GM12878 (cell line): ENCODE measurements at regions of chr17 and their contacts with region 1.

Region 1: GRCh38 chr17:49997791-49998703 is 3.0 kb upstream of the DLX3 start:
- DNase-seq: peak; percentile 34
- ATAC-seq: peak; percentile 96
- H3K4me3 ChIP-seq: no peak overlapping the region
- H3K27ac ChIP-seq: no peak overlapping the region
- H3K4me1 ChIP-seq: 0 out of 2 replicates have a peak, but pooled peaks cover 3% of the 10 kb centered on the region
- H3K27me3 ChIP-seq: peaks cover 10 to 28% of the 10 kb centered on the region in 2 experiments
- CTCF ChIP-seq: peak; percentile 89 to 95 (median 91)
- EP300 ChIP-seq: no peak
- POLR2A ChIP-seq: no peak
- RAD21 ChIP-seq: peak; percentile 88

Region 2: DNA sequence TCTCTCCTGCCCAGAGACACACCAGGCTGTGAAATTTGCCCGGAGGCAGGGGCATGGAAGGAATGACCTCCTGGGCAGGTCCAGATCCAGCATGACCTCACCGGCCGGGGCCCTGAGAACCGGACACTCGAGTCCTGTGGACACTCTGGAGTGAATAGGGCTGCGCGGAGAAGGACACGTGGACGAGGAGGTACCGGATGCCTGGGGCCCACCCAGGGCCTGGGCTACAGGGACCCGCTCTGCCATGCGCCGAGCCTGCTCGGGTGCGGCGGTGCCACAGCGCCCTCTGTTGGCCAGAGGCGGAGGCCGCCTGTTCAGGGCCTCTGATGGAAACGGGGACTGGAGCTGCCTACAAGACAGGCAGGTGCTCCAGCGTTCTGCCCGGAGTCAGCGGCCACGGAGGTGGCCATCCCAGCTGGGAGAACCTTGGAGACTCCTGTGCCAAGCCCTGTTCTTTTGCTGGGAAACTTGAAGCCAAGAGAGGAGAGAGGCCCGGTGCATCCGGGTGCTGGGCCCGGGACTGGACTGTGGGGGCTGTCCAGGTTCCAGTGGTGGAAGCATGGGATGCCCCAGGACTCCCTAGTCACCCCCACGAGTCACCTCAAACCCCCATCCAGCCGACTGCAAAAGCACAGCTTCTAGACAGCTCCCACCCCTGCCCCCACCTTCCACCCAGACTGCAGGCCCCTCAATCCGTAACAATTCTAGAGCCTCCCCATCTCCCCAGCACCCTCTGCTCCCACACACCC is 441.6 kb before region 1 on chr17:
- CTCF ChIA-PET with region 1: interaction called, 37 read pairs
- POLR2A ChIA-PET with region 1: no interaction called
- RAD21 ChIA-PET with region 1: interaction called, 3 read pairs
- SMC1A ChIA-PET with region 1: interaction called, 3 read pairs
- in situ Hi-C with region 1: no loop called
- intact Hi-C with region 1: no loop called
- DNase-seq: no peak
- ATAC-seq: peak; percentile 99
- H3K4me3 ChIP-seq: no peak overlapping the region
- H3K27ac ChIP-seq: no peak overlapping the region
- H3K4me1 ChIP-seq: peaks cover 4% of the 10 kb centered on the region; the same call in 1 of the 2 replicates
- H3K27me3 ChIP-seq: no peaks in the 10 kb centered on the region
- CTCF ChIP-seq: peak; percentile 95 to 97 (median 96); a peak in 5 of 6 replicates
- EP300 ChIP-seq: no peak
- POLR2A ChIP-seq: no peak
- RAD21 ChIP-seq: peak; percentile 93

Region 3: GRCh38 chr17:49707608-49708514 is 290.2 kb before region 1 on chr17 and contains the start of gene SLC35B1:
- CTCF ChIA-PET with region 1: interaction called, 6 read pairs
- POLR2A ChIA-PET with region 1: no interaction called
- RAD21 ChIA-PET with region 1: interaction called, 3 read pairs
- SMC1A ChIA-PET with region 1: interaction called, 4 read pairs
- in situ Hi-C with region 1: loop called (anchors 10 kb)
- intact Hi-C with region 1: loop called (anchors 10 kb)
- DNase-seq: peak; percentile 97
- ATAC-seq: peak; percentile 98
- H3K4me3 ChIP-seq: peak within 1 kb of the TSS; percentile 91
- H3K27ac ChIP-seq: peak within 1 kb of the TSS; percentile 98
- H3K4me1 ChIP-seq: 0 out of 2 replicates have a peak, but pooled peaks cover 3% of the 10 kb centered on the region
- H3K27me3 ChIP-seq: no peaks in the 10 kb centered on the region
- CTCF ChIP-seq: peak; percentile 97 to 99 (median 98); a peak in 5 of 6 replicates
- EP300 ChIP-seq: 0 out of 4 replicates have a peak, but pooled peaks of 1 of the 2 experiments have one; percentile 10
- POLR2A ChIP-seq: peak; percentile 93
- RAD21 ChIP-seq: peak; percentile 70
- polyA plus RNA-seq, gene SLC35B1: 40.0 to 44.4 TPM

Region 4: DNA sequence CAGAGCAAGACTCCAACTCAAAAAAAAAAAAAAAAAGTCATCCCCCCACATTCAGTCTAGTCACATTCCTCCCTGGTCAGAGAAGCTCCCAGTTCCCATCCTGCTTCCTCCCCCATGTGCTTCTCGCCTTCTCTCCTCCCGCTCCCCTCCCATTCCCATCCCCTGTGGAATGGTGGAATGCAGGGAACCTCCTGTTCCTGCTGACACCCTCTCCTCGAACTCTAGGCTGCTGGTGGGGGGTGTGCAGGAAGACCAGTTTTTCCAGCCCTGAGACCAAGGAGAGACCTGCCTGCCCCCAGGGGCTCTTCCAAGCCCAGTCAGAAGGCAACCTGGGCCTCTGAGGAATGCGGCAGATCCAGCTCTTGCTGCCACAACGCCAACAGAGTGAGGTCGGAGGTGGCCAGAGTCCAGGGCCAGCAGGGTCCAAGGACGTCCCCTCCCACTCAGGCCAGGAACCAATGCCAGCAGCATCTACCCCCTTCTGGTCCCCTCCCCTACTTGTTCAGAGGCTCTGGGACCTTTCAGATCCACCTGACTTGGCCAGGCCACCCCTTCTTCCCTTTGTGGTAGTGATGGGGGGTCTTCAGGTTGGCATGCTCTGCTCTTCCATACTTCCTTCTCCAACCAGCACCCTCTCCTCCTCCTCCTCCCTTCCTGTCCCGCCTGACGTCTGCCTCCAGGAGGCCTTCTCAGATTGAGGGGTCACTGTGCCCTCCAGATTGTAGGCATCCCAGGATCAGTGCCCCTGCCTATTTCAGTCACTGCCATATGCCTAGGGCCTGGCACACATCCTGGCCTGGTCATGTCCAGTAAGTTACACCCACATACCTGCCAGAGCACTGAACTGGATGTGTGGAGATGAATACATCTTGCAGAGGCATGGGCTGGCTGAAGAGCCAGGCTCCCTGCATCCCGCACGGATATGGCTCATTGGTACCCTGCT is 110.7 kb before region 1 on chr17:
- CTCF ChIA-PET with region 1: interaction called, 17 read pairs
- POLR2A ChIA-PET with region 1: no interaction called
- RAD21 ChIA-PET with region 1: interaction called, 4 read pairs
- SMC1A ChIA-PET with region 1: no interaction called
- in situ Hi-C with region 1: no loop called
- intact Hi-C with region 1: loop called (anchors 5 kb)
- DNase-seq: no peak
- ATAC-seq: no peak
- H3K4me3 ChIP-seq: no peak overlapping the region
- H3K27ac ChIP-seq: no peak overlapping the region
- H3K4me1 ChIP-seq: no peaks in the 10 kb centered on the region
- H3K27me3 ChIP-seq: peaks cover 5 to 9% of the 10 kb centered on the region in 2 experiments
- CTCF ChIP-seq: no peak
- EP300 ChIP-seq: no peak
- POLR2A ChIP-seq: no peak
- RAD21 ChIP-seq: no peak

Region 5: DNA sequence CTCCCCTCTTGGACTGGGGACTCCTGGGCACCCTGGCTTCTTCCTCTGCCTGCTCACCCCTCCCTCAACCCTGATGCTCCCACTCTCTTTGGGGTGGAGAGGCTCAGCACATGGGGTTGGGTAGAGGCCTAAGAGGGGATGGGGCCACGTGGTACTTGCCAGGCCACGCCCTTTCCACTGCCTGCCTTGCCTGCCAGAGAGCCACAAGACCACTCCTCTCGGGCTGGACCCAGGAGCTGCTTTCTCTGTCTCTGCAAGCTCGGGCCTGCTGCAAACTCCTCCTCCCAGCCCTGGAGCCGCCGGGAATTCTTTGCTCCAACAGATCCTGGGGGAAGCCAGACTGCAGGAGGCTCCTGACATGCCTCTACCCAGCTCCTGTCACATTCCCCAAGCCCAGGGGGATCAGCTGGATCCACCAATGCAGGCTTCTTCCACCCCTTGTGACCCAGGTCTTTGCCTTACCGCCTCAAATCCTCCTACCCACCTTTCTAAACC is 17.3 kb before region 1 on chr17:
- CTCF ChIA-PET with region 1: interaction called, 28 read pairs
- POLR2A ChIA-PET with region 1: no interaction called
- RAD21 ChIA-PET with region 1: interaction called, 7 read pairs
- SMC1A ChIA-PET with region 1: interaction called, 3 read pairs
- in situ Hi-C with region 1: no loop called
- intact Hi-C with region 1: no loop called
- DNase-seq: no peak
- ATAC-seq: no peak
- H3K4me3 ChIP-seq: no peak overlapping the region
- H3K27ac ChIP-seq: no peak overlapping the region
- H3K4me1 ChIP-seq: no peaks in the 10 kb centered on the region
- H3K27me3 ChIP-seq: peaks cover 0 to 6% of the 10 kb centered on the region in 2 experiments; a peak in 3 of 4 replicates
- CTCF ChIP-seq: no peak
- EP300 ChIP-seq: no peak
- POLR2A ChIP-seq: no peak
- RAD21 ChIP-seq: no peak

Region 6: GRCh38 chr17:50020841-50021599 is 23.0 kb after region 1 on chr17:
- CTCF ChIA-PET with region 1: interaction called, 10 read pairs
- POLR2A ChIA-PET with region 1: no interaction called
- RAD21 ChIA-PET with region 1: no interaction called
- SMC1A ChIA-PET with region 1: interaction called, 4 read pairs
- in situ Hi-C with region 1: no loop called
- intact Hi-C with region 1: no loop called
- DNase-seq: no peak
- ATAC-seq: no peak
- H3K4me3 ChIP-seq: no peak overlapping the region
- H3K27ac ChIP-seq: no peak overlapping the region
- H3K4me1 ChIP-seq: no peaks in the 10 kb centered on the region
- H3K27me3 ChIP-seq: no peaks in the 10 kb centered on the region
- CTCF ChIP-seq: no peak
- EP300 ChIP-seq: no peak
- POLR2A ChIP-seq: no peak
- RAD21 ChIP-seq: no peak

Region 7: GRCh38 chr17:50161023-50161910 is 163.2 kb after region 1 on chr17:
- CTCF ChIA-PET with region 1: no interaction called
- POLR2A ChIA-PET with region 1: no interaction called
- RAD21 ChIA-PET with region 1: no interaction called
- SMC1A ChIA-PET with region 1: no interaction called
- in situ Hi-C with region 1: no loop called
- intact Hi-C with region 1: no loop called
- DNase-seq: peak; percentile 80
- ATAC-seq: peak; percentile 96
- H3K4me3 ChIP-seq: peak overlapping the region; percentile 53
- H3K27ac ChIP-seq: peak overlapping the region; percentile 32; the same call in 1 of the 2 replicates
- H3K4me1 ChIP-seq: peaks cover 26% of the 10 kb centered on the region
- H3K27me3 ChIP-seq: no peaks in the 10 kb centered on the region
- CTCF ChIP-seq: peak; percentile 93 to 98 (median 97)
- EP300 ChIP-seq: no peak
- POLR2A ChIP-seq: peak; percentile 83
- RAD21 ChIP-seq: peak; percentile 71